Prostate gland (tissue), 2 donors: ENCODE measurements at regions of chr19 and their contacts with region 1.

Region 1: GRCh38 chr19:37370880-37371661 is at the start of gene ZNF527:
- DNase-seq: peak; percentile 96
- H3K4me3 ChIP-seq: peak within 1 kb of the TSS; percentile 51 to 62
- H3K27ac ChIP-seq: peak within 1 kb of the TSS; percentile 78 to 84
- H3K4me1 ChIP-seq: no peaks in the 10 kb centered on the region
- H3K27me3 ChIP-seq: no peaks in the 10 kb centered on the region
- CTCF ChIP-seq: peak in 2 of 4 experiments; percentile 30 to 34
- POLR2A ChIP-seq: peak; percentile 80
- total RNA-seq, gene ZNF527: 10.7 to 15.0 TPM

Region 2: DNA sequence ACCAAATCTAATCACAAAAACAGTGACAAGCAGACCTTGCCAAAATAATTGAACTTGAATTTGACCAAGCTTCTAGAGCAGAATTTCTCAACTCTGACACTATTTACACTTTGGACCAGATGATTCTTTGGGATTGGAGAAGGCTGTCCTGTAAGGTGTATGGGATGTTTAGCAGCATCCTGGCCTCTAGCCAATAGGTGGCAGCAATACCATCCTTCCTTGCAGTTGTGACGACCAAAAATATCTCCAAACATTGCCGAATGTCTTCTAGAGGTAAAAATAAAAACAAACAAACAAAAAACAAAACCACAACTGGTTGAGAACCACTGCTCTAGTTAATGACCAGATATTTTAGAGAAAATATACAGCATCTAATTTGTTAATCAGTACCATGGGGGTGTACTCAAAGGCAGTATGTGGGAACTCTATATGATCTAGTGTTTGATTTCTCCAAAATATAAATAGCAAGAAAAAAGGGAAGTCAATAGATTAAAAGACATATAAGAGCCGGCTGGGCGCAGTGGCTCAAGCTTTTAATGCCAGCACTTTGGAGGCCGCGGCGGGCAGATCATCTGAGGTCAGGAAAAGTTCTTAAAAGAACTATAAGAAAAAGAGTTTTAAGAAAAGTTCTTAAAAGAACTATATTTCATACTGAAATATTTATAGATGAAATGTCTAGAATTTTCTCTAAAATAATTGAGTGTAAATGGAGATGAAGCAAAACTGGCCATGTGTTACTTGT is 61.1 kb before region 1 on chr19:
- intact Hi-C with region 1: no loop called
- DNase-seq: no peak
- H3K4me3 ChIP-seq: no peak overlapping the region
- H3K27ac ChIP-seq: no peak overlapping the region
- H3K4me1 ChIP-seq: no peaks in the 10 kb centered on the region
- H3K27me3 ChIP-seq: no peaks in the 10 kb centered on the region
- CTCF ChIP-seq: no peak
- POLR2A ChIP-seq: no peak

Region 3: GRCh38 chr19:37334179-37335071 is 36.6 kb before region 1 on chr19:
- intact Hi-C with region 1: loop called (anchors 5 kb)
- DNase-seq: peak; percentile 93
- H3K4me3 ChIP-seq: peak overlapping the region; percentile 63 to 66
- H3K27ac ChIP-seq: peak overlapping the region; percentile 87 to 89
- H3K4me1 ChIP-seq: no peaks in the 10 kb centered on the region
- H3K27me3 ChIP-seq: no peaks in the 10 kb centered on the region
- CTCF ChIP-seq: peak in 1 of 4 experiments; percentile 4
- POLR2A ChIP-seq: peak; percentile 48

Region 4: GRCh38 chr19:37655689-37656371 is 284.8 kb after region 1 on chr19:
- intact Hi-C with region 1: loop called (anchors 10 kb)
- DNase-seq: peak; percentile 84
- H3K4me3 ChIP-seq: peak overlapping the region; percentile 71 to 80
- H3K27ac ChIP-seq: peak overlapping the region; percentile 95 to 98
- H3K4me1 ChIP-seq: no peaks in the 10 kb centered on the region
- H3K27me3 ChIP-seq: no peaks in the 10 kb centered on the region
- CTCF ChIP-seq: peak in 1 of 4 experiments; percentile 5
- POLR2A ChIP-seq: peak; percentile 12